Cardiac septum (tissue), 1 donor: ENCODE measurements at regions of chr7 and their contacts with region 1.

Region 1: DNA sequence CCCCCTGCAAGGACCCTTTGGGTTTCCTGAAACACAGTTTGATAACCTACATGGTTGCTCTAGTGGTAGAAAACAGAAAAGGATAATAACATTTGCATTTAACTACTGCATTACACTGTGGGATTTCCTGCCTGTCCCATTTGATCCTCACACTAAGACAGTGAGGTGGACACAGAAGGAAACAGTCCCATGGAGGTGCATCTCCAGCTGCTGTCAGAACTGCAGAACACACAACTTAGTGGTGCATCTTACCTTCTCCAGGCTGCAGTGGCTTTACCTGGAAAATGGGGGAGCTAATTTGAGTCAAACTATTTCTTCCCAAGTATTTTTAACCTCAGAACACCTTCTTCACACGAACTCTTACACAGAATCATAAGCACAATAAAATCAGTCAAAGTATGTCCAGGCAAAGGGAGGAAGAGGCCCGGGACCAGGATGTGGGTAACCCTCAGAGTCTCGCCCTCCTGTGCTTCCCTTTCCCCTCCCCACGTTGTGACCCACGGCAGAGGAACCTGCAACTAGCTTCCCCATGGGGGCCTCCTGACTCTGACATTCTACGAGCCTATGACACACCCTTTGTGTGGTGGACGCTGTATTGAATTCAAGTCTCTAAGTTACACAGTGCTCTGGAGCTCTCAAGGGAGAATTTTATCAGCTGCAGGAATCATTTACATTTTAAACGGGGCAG is 33.7 kb downstream of the SCRN1 start:
- DNase-seq: no peak

Region 2: GRCh38 chr7:29557954-29558353 is 398.0 kb before region 1 on chr7:
- intact Hi-C with region 1: no loop called
- DNase-seq: no peak

Region 3: DNA sequence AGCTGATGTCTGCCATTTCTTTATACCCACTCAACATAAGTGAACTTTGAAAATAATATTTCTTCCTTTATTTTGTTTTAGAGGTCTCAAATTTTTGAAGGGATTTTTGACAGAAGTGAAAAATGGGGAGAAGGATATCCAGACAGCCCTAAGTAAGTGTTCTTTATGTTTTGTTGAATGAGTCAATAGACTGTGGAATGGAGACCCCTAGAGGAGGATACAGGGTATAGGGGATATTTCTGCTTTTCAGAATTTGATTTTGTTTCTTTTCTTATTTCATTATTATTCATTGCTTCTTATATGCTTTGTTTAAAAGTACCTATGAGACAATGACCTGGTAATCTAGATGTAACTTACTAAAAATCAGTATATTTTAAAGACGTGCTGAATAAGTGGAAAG is 106.6 kb after region 1 on chr7:
- intact Hi-C with region 1: loop called (anchors 10 kb)
- DNase-seq: no peak

Region 4: GRCh38 chr7:30134611-30135545 is 178.9 kb after region 1 on chr7 and contains the start of gene MTURN:
- intact Hi-C with region 1: no loop called
- DNase-seq: peak; percentile 94
- total RNA-seq, gene MTURN: 49.3 TPM